ENCODE measurements at regions of chr3 and their contacts with region 1.

Region 1: GRCh38 chr3:175682766-175683165 is 823.6 kb downstream of the NAALADL2 start:
- DNase-seq: no peak
- ATAC-seq: no peak
- H3K4me3 ChIP-seq: no peak overlapping the region
- H3K27ac ChIP-seq: no peak overlapping the region
- H3K4me1 ChIP-seq: no peaks in the 10 kb centered on the region
- H3K27me3 ChIP-seq: no peaks in the 10 kb centered on the region
- CTCF ChIP-seq: no peak

Region 2: DNA sequence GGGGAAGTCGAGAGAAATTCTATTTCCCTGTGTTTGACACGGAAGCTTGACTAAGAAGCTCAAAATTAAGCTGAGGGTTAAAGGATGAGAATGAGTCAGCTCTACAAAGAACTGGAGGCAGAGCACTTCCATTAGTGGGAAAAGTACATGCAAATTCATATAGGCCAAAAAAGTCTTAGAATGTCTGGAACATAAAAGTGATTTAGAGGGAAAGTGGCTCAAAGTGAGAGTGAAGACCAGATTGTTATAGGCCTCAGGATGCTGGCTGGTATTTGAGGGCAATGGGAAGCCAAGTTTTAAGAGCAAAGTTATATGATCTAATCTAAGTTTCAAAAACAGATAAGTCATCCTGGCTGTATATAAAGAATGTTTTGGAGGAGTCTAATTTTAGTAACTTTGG is 33.7 kb after region 1 on chr3:
- CTCF ChIA-PET with region 1: no interaction called
- POLR2A ChIA-PET with region 1: interaction called, 10 read pairs
- intact Hi-C with region 1: no loop called
- DNase-seq: no peak
- ATAC-seq: no peak
- H3K4me3 ChIP-seq: no peak overlapping the region
- H3K27ac ChIP-seq: no peak overlapping the region
- H3K4me1 ChIP-seq: no peaks in the 10 kb centered on the region
- H3K27me3 ChIP-seq: no peaks in the 10 kb centered on the region
- CTCF ChIP-seq: no peak